MCF 10A (cell line): ENCODE measurements at regions of chr11 and their contacts with region 1.

Region 1: DNA sequence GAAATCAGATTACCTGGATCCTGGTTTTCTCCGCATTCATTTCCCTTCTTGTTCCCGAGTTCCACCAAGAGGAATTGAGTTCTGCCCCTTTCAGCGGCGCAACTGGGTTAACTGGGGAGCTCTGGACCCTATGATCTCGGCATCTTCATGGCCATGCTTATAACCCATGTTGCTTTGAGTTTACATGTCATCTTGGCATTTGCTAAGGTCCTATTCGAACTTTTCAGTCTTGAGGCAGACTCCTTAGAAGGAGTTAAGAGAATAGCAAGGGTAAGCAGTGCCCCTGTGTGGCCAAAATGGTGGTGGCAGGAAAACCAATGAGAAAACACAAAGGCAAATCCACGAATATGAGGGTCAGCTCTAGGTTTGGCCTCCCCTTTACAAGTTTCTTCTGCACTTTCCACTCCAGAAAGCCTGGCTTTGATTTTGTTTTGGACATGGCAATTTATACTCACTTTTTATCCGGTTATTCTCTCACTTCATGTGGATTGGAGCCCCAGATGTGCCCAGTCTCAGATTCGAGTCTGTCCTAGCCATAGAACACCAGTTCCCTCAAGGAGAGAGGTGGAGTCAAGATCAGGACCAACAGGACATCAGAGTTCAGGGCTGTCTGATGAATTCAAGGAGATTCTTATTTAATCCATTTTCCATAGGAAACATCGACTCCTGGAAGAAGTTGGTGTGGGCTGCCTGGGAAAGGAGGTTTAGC is 55.3 kb upstream of the FBXO3 start:
- DNase-seq: peak; percentile 77
- H3K4me3 Mint-ChIP-seq: peak overlapping the region; percentile 62
- H3K27ac Mint-ChIP-seq: peak overlapping the region; percentile 42
- H3K4me1 Mint-ChIP-seq: peaks cover 6% of the 10 kb centered on the region
- H3K27me3 Mint-ChIP-seq: peaks cover 15% of the 10 kb centered on the region
- CTCF ChIP-seq: peak; percentile 82

Region 2: GRCh38 chr11:33116535-33116934 is 713.1 kb before region 1 on chr11:
- CTCF ChIA-PET with region 1: no interaction called
- POLR2A ChIA-PET with region 1: no interaction called
- intact Hi-C with region 1: no loop called
- DNase-seq: peak; percentile 68
- H3K4me3 Mint-ChIP-seq: no peak overlapping the region
- H3K27ac Mint-ChIP-seq: no peak overlapping the region
- H3K4me1 Mint-ChIP-seq: peaks cover 7% of the 10 kb centered on the region
- H3K27me3 Mint-ChIP-seq: no peaks in the 10 kb centered on the region
- CTCF ChIP-seq: no peak

Region 3: GRCh38 chr11:33362051-33362910 is 467.3 kb before region 1 on chr11:
- CTCF ChIA-PET with region 1: interaction called, 12 read pairs
- POLR2A ChIA-PET with region 1: no interaction called
- intact Hi-C with region 1: loop called (anchors 1 kb)
- DNase-seq: peak; percentile 50
- H3K4me3 Mint-ChIP-seq: no peak overlapping the region
- H3K27ac Mint-ChIP-seq: no peak overlapping the region
- H3K4me1 Mint-ChIP-seq: no peaks in the 10 kb centered on the region
- H3K27me3 Mint-ChIP-seq: no peaks in the 10 kb centered on the region
- CTCF ChIP-seq: peak; percentile 50

Region 4: GRCh38 chr11:33819278-33819677 is 10.3 kb before region 1 on chr11:
- CTCF ChIA-PET with region 1: interaction called, 17 read pairs
- POLR2A ChIA-PET with region 1: interaction called, 5 read pairs
- intact Hi-C with region 1: no loop called
- DNase-seq: no peak
- H3K4me3 Mint-ChIP-seq: no peak overlapping the region
- H3K27ac Mint-ChIP-seq: no peak overlapping the region
- H3K4me1 Mint-ChIP-seq: no peaks in the 10 kb centered on the region
- H3K27me3 Mint-ChIP-seq: peaks cover 21% of the 10 kb centered on the region
- CTCF ChIP-seq: no peak